ENCODE measurements at regions of chr11 and their contacts with region 1.

Region 1: GRCh38 chr11:114354076-114354475 is 46.2 kb downstream of the C11orf71 start:
- H3K4me3 ChIP-seq: no peak overlapping the region
- H3K27ac ChIP-seq: no peak overlapping the region
- H3K4me1 ChIP-seq: no peaks in the 10 kb centered on the region
- CTCF ChIP-seq: no peak

Region 2: DNA sequence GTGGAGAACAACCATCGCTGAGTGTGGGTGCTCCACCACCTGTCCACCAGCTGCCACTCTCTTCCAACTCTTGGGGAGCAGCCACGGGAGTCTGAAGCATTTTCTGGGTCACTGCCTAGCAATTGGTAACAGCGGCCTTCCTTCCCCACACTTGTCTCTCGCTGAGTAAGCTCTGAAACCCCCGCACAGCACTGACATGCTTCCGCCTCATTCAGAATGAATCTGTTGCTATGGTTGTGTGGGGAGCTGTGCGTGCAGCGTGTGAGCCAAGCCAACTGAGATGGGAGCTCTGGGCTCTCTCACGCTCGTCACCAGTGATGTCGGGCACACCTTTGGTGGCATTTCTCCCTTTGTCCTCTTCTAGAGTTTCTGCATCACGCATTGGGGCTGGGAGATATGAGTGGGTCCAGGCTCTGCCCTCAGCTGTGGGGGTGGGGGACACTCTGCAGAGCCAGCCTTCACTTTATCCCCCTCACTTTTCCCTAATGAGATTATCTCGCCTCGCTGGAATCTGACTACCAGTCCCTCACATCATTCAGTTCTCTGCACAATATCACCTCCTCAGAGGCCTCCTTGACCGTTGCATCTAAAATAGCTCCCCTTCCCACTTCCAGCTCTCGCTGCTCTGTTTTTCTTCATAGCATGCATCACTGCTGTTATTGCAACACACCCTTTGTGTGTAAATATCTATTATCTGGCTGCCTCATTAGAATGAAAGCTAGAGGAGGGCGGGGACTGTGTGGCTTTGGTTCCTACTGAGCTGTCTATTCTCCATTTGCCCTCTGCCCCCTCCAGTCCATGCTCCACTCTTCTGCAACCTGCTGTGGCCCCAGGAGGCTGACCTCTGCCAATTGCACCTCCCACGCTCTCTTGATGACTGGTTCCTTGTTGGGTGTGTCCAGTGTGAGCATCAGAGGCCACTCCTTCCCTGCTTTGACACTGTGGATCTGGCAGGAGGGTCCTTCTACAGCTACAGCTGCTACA is 1720.1 kb after region 1 on chr11:
- CTCF ChIA-PET with region 1: interaction called, 10 read pairs
- POLR2A ChIA-PET with region 1: no interaction called
- H3K4me3 ChIP-seq: no peak overlapping the region
- H3K27ac ChIP-seq: no peak overlapping the region
- H3K4me1 ChIP-seq: no peaks in the 10 kb centered on the region
- CTCF ChIP-seq: no peak

Measured in HEK293 (cell line).